WTC11 (cell line): ENCODE measurements at regions of chr6 and their contacts with region 1.

Region 1: DNA sequence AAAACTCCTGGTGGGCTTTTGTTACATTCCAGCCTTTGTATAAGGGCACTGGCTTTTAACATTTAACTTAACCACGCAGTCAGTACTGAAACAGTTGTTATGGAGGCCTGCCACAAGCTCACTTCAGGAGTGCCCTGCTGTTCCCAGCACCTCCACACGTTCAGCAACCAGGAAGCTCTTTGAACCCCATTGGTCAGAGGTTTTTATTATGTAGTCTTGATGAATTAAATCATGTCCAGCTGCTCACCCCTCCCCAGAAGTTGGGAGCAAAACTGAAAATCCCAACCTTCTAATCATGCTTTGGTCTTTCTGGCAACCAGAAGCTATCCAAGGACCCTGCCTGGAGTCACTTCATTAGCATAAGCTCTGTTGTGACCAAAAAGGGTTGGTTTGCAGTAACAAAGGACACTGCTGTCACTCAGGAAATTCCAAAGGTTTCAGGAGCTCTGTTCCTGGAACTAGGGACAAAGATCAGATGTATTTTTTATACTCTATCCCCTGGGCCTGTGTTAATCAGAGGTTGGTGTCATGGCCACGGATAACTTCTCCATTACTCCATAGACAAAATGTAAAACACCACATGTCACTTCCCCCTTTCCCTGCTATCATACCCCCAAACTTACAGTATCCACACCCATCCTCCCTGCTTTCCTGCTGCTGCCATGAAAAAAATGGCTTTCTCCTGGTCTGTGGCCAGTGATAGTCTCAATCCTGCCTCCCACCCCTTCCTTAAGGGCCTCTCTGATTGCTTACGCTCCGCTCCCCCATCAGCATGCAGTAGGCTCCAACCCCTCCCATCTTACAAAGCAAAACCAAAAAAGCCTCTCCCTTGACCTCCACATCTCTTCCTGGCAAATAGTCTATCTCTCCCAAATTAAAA is 3.1 kb downstream of the ARMC12 start:
- DNase-seq: no peak
- ATAC-seq: peak; percentile 52
- H3K4me3 Mint-ChIP-seq: peak overlapping the region; percentile 5
- H3K27ac Mint-ChIP-seq: peak overlapping the region; percentile 94
- H3K4me1 Mint-ChIP-seq: peaks cover 63% of the 10 kb centered on the region
- H3K27me3 Mint-ChIP-seq: peaks cover 7% of the 10 kb centered on the region
- CTCF ChIP-seq: no peak

Region 2: DNA sequence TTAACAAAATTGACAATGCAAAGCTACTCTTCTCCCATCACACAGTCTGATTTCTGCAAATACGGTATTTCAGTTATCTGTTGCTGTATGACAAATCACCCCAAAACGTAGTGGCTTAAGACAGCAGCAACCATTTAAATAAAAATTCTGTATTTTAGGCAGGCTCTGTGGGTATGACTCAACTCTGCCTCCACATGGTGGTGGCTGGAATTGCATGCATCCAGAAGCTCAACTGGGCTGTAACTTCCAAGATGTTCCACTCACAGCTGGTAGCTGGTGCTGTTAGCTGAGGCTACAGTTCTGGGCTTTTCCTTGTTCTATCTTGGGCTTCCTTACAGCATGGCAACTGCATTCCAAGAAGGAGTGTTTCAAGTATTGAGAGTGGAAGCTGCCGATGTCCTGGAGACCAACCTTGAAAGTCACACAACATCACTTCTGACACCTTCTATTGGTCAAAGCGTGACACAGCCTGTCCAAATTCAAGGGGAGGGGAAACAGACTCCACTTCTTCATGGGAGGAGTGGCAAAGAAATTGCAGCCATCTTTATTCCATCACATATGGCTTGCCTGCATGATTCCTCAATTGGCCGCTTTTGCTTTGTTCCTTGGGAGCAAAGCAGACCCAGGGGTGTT is 187.5 kb before region 1 on chr6:
- CTCF ChIA-PET with region 1: interaction called, 10 read pairs
- POLR2A ChIA-PET with region 1: no interaction called
- DNase-seq: peak; percentile 79
- ATAC-seq: peak; percentile 74
- H3K4me3 Mint-ChIP-seq: no peak overlapping the region
- H3K27ac Mint-ChIP-seq: no peak overlapping the region
- H3K4me1 Mint-ChIP-seq: no peaks in the 10 kb centered on the region
- H3K27me3 Mint-ChIP-seq: no peaks in the 10 kb centered on the region
- CTCF ChIP-seq: peak; percentile 92

Region 3: DNA sequence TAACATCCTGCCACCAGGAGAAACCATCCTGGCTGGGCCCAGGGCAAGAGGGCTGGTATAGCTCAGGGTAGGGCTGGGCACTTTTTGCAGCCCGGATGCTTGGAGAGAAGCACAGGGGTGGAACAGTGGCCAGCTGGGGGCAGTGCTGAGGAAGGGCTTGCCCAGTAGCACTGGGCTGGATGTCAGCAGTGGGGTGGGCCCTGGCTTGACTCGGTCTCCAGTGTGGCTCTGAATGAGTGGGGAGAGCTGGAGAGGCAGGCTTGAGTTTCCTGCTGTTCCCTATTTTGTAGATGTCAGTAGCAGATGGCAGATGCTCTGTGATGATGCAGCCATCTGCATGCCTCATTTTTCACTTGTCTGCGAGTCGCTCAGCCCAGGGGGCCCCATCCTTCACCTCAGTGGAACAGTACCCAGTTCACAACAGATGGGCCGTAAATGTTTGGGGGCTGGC is 170.8 kb before region 1 on chr6:
- CTCF ChIA-PET with region 1: interaction called, 14 read pairs
- POLR2A ChIA-PET with region 1: no interaction called
- DNase-seq: peak; percentile 66
- ATAC-seq: peak; percentile 95
- H3K4me3 Mint-ChIP-seq: no peak overlapping the region
- H3K27ac Mint-ChIP-seq: no peak overlapping the region
- H3K4me1 Mint-ChIP-seq: peaks cover 15% of the 10 kb centered on the region
- H3K27me3 Mint-ChIP-seq: no peaks in the 10 kb centered on the region
- CTCF ChIP-seq: peak; percentile 45

Region 4: GRCh38 chr6:35583893-35584688 is 155.8 kb before region 1 on chr6:
- CTCF ChIA-PET with region 1: interaction called, 40 read pairs
- POLR2A ChIA-PET with region 1: no interaction called
- DNase-seq: peak; percentile 75
- ATAC-seq: peak; percentile 86
- H3K4me3 Mint-ChIP-seq: no peak overlapping the region
- H3K27ac Mint-ChIP-seq: no peak overlapping the region
- H3K4me1 Mint-ChIP-seq: peaks cover 4% of the 10 kb centered on the region; the same call in 1 of the 2 replicates
- H3K27me3 Mint-ChIP-seq: no peaks in the 10 kb centered on the region
- CTCF ChIP-seq: peak; percentile 73

Region 5: DNA sequence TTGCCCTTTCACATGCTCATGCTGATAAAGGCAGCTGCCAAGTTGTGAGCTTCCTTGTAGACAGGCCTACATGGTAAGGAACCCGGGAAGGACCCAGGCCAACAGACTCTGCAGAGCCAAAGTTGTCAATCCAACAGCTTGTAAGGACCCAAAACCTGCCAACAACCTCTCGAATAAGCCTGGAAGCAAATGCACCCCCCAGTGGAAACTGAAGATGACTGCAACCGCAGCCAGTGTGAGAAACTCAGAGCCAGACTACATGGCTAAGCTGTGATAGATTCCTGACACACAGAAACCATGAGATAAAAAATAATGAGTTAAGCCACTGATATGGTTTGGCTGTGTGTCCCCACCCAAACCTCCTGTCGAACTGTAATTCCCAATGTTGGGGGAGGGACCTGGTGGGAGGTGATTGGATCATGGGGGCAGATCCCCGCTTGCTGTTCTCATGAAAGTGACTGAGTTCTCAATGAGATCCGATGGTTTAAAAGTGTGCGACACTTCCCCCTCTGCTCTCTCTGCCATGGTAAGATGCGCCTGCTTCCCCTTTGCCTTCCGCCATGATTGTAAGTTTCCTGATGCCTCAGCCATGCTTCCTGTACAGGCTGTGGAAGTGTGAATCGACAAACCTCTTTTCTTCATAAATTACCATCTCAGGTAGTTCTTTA is 17.7 kb after region 1 on chr6:
- CTCF ChIA-PET with region 1: interaction called, 86 read pairs
- POLR2A ChIA-PET with region 1: no interaction called
- DNase-seq: peak; percentile 57
- ATAC-seq: peak; percentile 81
- H3K4me3 Mint-ChIP-seq: no peak overlapping the region
- H3K27ac Mint-ChIP-seq: peak overlapping the region; percentile 86
- H3K4me1 Mint-ChIP-seq: peaks cover 50% of the 10 kb centered on the region
- H3K27me3 Mint-ChIP-seq: no peaks in the 10 kb centered on the region
- CTCF ChIP-seq: no peak

Region 6: GRCh38 chr6:35765739-35766138 is 25.9 kb after region 1 on chr6:
- CTCF ChIA-PET with region 1: interaction called, 6 read pairs
- POLR2A ChIA-PET with region 1: interaction called, 11 read pairs
- DNase-seq: peak; percentile 30
- ATAC-seq: no peak
- H3K4me3 Mint-ChIP-seq: no peak overlapping the region
- H3K27ac Mint-ChIP-seq: peak overlapping the region; percentile 24; the same call in 1 of the 2 replicates
- H3K4me1 Mint-ChIP-seq: peaks cover 18% of the 10 kb centered on the region
- H3K27me3 Mint-ChIP-seq: no peaks in the 10 kb centered on the region
- CTCF ChIP-seq: no peak

Region 7: GRCh38 chr6:35797837-35798526 is 58.1 kb after region 1 on chr6:
- CTCF ChIA-PET with region 1: no interaction called
- POLR2A ChIA-PET with region 1: no interaction called
- DNase-seq: no peak
- ATAC-seq: peak; percentile 59
- H3K4me3 Mint-ChIP-seq: no peak overlapping the region
- H3K27ac Mint-ChIP-seq: 0 out of 2 replicates have a peak overlapping the region, but pooled peaks have one; percentile 90
- H3K4me1 Mint-ChIP-seq: peaks cover 26% of the 10 kb centered on the region
- H3K27me3 Mint-ChIP-seq: peaks cover 4% of the 10 kb centered on the region
- CTCF ChIP-seq: no peak